ENCODE measurements at regions of chr2 and their contacts with region 1.

Region 1: GRCh38 chr2:207529330-207530159 is at the start of gene CREB1:
- DNase-seq: peak; percentile 100
- H3K4me3 Mint-ChIP-seq: peak within 1 kb of the TSS; percentile 99
- H3K27ac Mint-ChIP-seq: peak within 1 kb of the TSS; percentile 100
- H3K4me1 Mint-ChIP-seq: peaks cover 52% of the 10 kb centered on the region
- H3K27me3 Mint-ChIP-seq: no peaks in the 10 kb centered on the region
- total RNA-seq, gene CREB1: 98.2 and 111 TPM in 2 replicates

Region 2: GRCh38 chr2:206159346-206160124 is 1370.0 kb before region 1 on chr2 and contains the starts of genes EEF1B2 and NDUFS1:
- intact Hi-C with region 1: loop called (anchors 2 kb)
- DNase-seq: peak; percentile 97
- H3K4me3 Mint-ChIP-seq: peak within 1 kb of the TSS; percentile 99
- H3K27ac Mint-ChIP-seq: peak within 1 kb of the TSS; percentile 99
- H3K4me1 Mint-ChIP-seq: peaks cover 52% of the 10 kb centered on the region
- H3K27me3 Mint-ChIP-seq: no peaks in the 10 kb centered on the region
- total RNA-seq, gene EEF1B2: 698 and 711 TPM in 2 replicates
- total RNA-seq, gene NDUFS1: 76.6 and 78.0 TPM in 2 replicates

Region 3: DNA sequence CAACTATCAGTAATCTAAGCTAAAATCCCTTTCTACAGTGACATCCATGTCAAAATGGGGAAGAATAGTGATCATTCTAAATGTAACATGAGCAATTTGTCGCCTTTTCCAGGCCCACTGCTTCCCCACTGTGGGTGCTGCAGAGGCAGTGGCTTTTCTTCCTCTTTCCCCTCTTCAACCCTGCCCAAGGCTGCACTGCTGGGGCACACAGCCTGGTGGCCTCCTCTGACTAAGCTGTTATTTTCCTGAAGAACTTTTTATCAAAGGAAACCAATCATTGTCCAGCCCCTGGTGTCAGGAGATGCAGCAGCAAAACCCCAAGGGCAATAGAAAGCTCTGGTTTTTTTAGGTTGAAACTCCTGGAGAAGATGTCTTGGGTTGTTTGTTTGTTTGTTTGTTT is 246.2 kb before region 1 on chr2:
- intact Hi-C with region 1: loop called (anchors 2 kb)
- DNase-seq: no peak
- H3K4me3 Mint-ChIP-seq: peak overlapping the region; percentile 53
- H3K27ac Mint-ChIP-seq: peak overlapping the region; percentile 85
- H3K4me1 Mint-ChIP-seq: peaks cover 76% of the 10 kb centered on the region
- H3K27me3 Mint-ChIP-seq: no peaks in the 10 kb centered on the region

Region 4: GRCh38 chr2:207491956-207492860 is 37.3 kb before region 1 on chr2:
- intact Hi-C with region 1: loop called (anchors 5 kb)
- DNase-seq: no peak
- H3K4me3 Mint-ChIP-seq: no peak overlapping the region
- H3K27ac Mint-ChIP-seq: no peak overlapping the region
- H3K4me1 Mint-ChIP-seq: peaks cover 6% of the 10 kb centered on the region
- H3K27me3 Mint-ChIP-seq: peaks cover 5% of the 10 kb centered on the region

Region 5: GRCh38 chr2:207546822-207547221 is 17.3 kb after region 1 on chr2:
- intact Hi-C with region 1: loop called (anchors 1 kb)
- DNase-seq: no peak
- H3K4me3 Mint-ChIP-seq: no peak overlapping the region
- H3K27ac Mint-ChIP-seq: peak overlapping the region; percentile 80
- H3K4me1 Mint-ChIP-seq: peaks cover 29% of the 10 kb centered on the region
- H3K27me3 Mint-ChIP-seq: no peaks in the 10 kb centered on the region

Region 6: DNA sequence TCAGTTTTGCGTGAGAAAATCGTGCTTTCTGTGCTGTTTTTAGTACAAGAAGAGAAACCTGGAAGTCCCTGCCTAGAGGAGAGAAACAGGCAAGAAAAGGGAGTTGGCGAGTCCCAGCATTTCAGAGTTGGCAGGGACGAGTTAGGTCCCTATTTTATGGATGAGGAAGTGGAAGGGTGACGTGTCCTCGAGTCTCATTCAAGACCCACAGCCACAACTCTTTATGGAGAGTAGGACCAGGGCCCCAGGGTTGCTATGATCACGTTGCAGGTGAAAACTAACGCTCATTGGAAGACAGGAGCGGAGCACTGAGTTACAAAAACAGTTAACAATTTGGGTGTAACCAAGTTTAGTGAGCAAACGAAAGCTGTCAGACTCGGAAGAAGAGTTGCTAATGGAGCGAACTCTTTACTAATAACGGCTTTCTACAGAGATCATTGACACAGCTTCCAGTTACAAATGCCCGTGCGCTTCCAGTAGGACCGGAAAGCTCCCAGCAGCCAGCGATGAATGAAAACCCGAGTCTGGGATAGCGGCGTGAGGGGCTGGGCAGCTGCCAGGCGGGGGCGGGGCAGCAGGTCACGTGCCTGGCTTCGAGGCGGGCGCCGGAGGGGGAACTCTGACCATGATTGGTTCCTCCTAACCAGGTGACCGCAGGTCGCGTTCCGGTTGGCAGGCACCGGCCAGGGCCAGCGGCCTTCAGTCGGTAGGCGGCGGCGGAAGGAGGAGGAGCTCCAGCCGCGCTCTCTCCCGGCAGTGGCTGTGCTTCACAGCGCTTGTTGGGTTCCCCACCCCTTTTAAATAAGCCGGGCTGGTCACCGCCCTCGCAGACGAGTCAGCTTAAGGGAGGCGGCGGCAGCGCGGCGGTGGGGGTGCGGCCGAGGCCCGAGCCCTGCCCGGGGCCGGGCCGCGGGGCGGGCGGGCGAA is 181.5 kb after region 1 on chr2 and contains the start of gene CCNYL1:
- intact Hi-C with region 1: loop called (anchors 1 kb)
- DNase-seq: peak; percentile 98
- H3K4me3 Mint-ChIP-seq: peak within 1 kb of the TSS; percentile 96
- H3K27ac Mint-ChIP-seq: peak within 1 kb of the TSS; percentile 76
- H3K4me1 Mint-ChIP-seq: peaks cover 36% of the 10 kb centered on the region
- H3K27me3 Mint-ChIP-seq: no peaks in the 10 kb centered on the region
- total RNA-seq, gene CCNYL1: 6.8 and 8.7 TPM in 2 replicates

Measured in activated T-helper 1 cell treated with anti-CD3 and anti-CD28 coated beads, Interleukin-12 subunit alpha, Interleukin-12 subunit beta, Interleukin-2, Interleukin-4 antibody, amounts not matched to agents 30 ng/mL and 10 ng/mL and 1 ng/mL, durations not matched to agents 14 hours and 24 hours and 36 hours (primary cell).